Activated CD4-positive, alpha-beta memory T cell treated with anti-CD3 and anti-CD28 coated beads, Interleukin-2, amount 10 ng/mL, durations not matched to agents 7 days and 5 days (primary cell): ENCODE measurements at regions of chrX and their contacts with region 1.

Region 1: GRCh38 chrX:55488593-55489313 is 895 bp downstream of the USP51 start:
- DNase-seq: peak; percentile 65
- H3K4me3 Mint-ChIP-seq: peak overlapping the region; percentile 88
- H3K27ac Mint-ChIP-seq: peak overlapping the region; percentile 90
- H3K4me1 Mint-ChIP-seq: peaks cover 21% of the 10 kb centered on the region
- H3K27me3 Mint-ChIP-seq: no peaks in the 10 kb centered on the region

Region 2: GRCh38 chrX:54999717-55000598 is 488.8 kb before region 1 on chrX and contains the start of gene APEX2:
- CTCF ChIA-PET with region 1: no interaction called
- POLR2A ChIA-PET with region 1: interaction called, 12 read pairs
- DNase-seq: peak; percentile 90
- H3K4me3 Mint-ChIP-seq: peak within 1 kb of the TSS; percentile 97
- H3K27ac Mint-ChIP-seq: peak within 1 kb of the TSS; percentile 90
- H3K4me1 Mint-ChIP-seq: peaks cover 31% of the 10 kb centered on the region
- H3K27me3 Mint-ChIP-seq: no peaks in the 10 kb centered on the region
- total RNA-seq, gene APEX2: 25.5 to 26.8 TPM

Region 3: GRCh38 chrX:55451990-55452832 is 36.5 kb before region 1 on chrX and contains the start of gene MAGEH1:
- CTCF ChIA-PET with region 1: interaction called, 10 read pairs
- POLR2A ChIA-PET with region 1: interaction called, 28 read pairs
- DNase-seq: peak; percentile 81
- H3K4me3 Mint-ChIP-seq: peak within 1 kb of the TSS; percentile 94
- H3K27ac Mint-ChIP-seq: peak within 1 kb of the TSS; percentile 85
- H3K4me1 Mint-ChIP-seq: peaks cover 22% of the 10 kb centered on the region
- H3K27me3 Mint-ChIP-seq: no peaks in the 10 kb centered on the region
- total RNA-seq, gene MAGEH1: 14.3 to 16.1 TPM

Region 4: GRCh38 chrX:55593756-55594257 is 105.1 kb after region 1 on chrX:
- CTCF ChIA-PET with region 1: no interaction called
- POLR2A ChIA-PET with region 1: no interaction called
- DNase-seq: no peak
- H3K4me3 Mint-ChIP-seq: no peak overlapping the region
- H3K27ac Mint-ChIP-seq: no peak overlapping the region
- H3K4me1 Mint-ChIP-seq: no peaks in the 10 kb centered on the region
- H3K27me3 Mint-ChIP-seq: no peaks in the 10 kb centered on the region

Region 5: GRCh38 chrX:55717521-55718497 is 229.1 kb after region 1 on chrX and contains the start of gene RRAGB:
- CTCF ChIA-PET with region 1: interaction called, 3 read pairs
- POLR2A ChIA-PET with region 1: interaction called, 19 read pairs
- DNase-seq: peak; percentile 92
- H3K4me3 Mint-ChIP-seq: peak within 1 kb of the TSS; percentile 85
- H3K27ac Mint-ChIP-seq: peak within 1 kb of the TSS; percentile 88
- H3K4me1 Mint-ChIP-seq: peaks cover 22% of the 10 kb centered on the region
- H3K27me3 Mint-ChIP-seq: no peaks in the 10 kb centered on the region
- total RNA-seq, gene RRAGB: 7.1 to 7.5 TPM

Region 6: DNA sequence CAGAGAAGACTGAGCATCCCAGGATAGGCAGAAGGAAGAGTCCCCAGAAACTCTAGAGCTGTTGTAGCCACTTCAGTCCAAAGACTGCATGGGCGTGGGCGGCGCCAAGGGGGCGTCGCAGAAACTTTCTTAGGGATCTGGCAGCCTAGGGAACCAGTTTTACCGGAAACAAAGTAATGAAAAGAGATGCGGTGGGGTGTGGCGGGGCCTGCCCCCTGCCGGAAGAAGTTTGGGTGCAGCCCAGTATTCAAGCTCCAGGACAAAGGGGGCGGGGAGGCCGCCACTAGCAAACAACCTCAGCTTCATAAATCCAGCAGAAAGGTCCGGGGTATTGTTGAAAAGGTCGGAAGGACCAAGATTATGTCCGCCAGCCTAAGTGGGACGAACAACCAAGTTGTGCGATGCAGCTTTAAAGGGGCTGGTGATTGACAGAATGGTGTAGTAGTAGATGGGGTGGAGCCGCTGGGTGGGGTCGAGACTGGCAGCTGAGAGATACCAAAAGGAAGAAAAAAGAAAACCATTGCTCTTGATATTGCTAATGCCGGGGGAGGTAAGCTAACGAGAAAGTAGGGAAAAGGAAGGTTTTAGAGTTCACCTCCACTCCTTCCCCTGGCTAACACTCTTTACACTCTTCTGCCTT is 419.3 kb after region 1 on chrX:
- CTCF ChIA-PET with region 1: no interaction called
- POLR2A ChIA-PET with region 1: interaction called, 12 read pairs
- DNase-seq: peak; percentile 66
- H3K4me3 Mint-ChIP-seq: peak overlapping the region; percentile 82
- H3K27ac Mint-ChIP-seq: peak overlapping the region; percentile 91
- H3K4me1 Mint-ChIP-seq: peaks cover 21% of the 10 kb centered on the region
- H3K27me3 Mint-ChIP-seq: no peaks in the 10 kb centered on the region